PC-9 (cell line): ENCODE measurements at regions of chrX and their contacts with region 1.

Region 1: GRCh38 chrX:31500920-31501319 is 429.1 kb upstream of the FTHL17 start:
- DNase-seq: peak in 1 of 2 experiments; percentile 44
- H3K4me3 ChIP-seq: no peak overlapping the region
- H3K27ac ChIP-seq: no peak overlapping the region
- H3K4me1 ChIP-seq: no peaks in the 10 kb centered on the region
- H3K27me3 ChIP-seq: no peaks in the 10 kb centered on the region
- CTCF ChIP-seq: no peak

Region 2: DNA sequence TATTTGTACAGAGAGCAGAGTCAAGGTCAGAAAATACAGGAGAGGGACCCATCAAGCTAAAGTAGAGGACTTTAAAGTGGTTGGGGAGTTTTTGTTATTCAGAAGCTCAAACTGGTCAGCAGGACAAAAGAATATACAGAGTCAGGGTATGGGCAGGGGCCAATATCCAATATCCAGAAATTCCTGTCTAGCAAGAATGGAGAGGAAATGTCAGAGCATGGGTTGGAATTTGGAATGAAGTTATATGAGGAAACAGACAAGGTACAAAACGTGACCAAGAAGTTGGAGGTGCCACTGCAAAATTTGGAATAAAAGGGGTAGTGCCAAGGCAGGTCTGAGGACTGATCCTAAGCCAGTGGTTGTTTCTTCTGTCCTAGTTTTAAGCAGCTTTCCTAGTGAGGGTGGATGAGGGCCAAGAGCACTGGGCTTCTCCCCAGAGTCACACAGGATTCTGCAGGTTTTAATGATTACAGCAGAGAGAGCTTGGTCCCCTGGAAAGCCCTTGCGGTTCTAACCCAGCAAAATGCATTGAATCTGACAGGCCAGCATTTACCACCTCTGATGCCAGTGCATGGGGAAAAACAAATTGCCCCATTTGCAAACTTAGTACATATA is 124.4 kb before region 1 on chrX:
- CTCF ChIA-PET with region 1: no interaction called
- POLR2A ChIA-PET with region 1: no interaction called
- intact Hi-C with region 1: no loop called
- DNase-seq: peak in 1 of 2 experiments; percentile 64
- H3K4me3 ChIP-seq: no peak overlapping the region
- H3K27ac ChIP-seq: no peak overlapping the region
- H3K4me1 ChIP-seq: peaks cover 17% of the 10 kb centered on the region
- H3K27me3 ChIP-seq: no peaks in the 10 kb centered on the region
- CTCF ChIP-seq: no peak

Region 3: GRCh38 chrX:32026772-32027171 is 525.9 kb after region 1 on chrX:
- CTCF ChIA-PET with region 1: no interaction called
- POLR2A ChIA-PET with region 1: interaction called, 11 read pairs
- intact Hi-C with region 1: no loop called
- DNase-seq: no peak
- H3K4me3 ChIP-seq: no peak overlapping the region
- H3K27ac ChIP-seq: no peak overlapping the region
- H3K4me1 ChIP-seq: no peaks in the 10 kb centered on the region
- H3K27me3 ChIP-seq: no peaks in the 10 kb centered on the region
- CTCF ChIP-seq: no peak